Cardiac septum (tissue), 1 donor: ENCODE measurements at regions of chr18 and their contacts with region 1.

Region 1: GRCh38 chr18:44679056-44679905 is 1.4 kb upstream of the SETBP1 start:
- DNase-seq: peak; percentile 90

Region 2: DNA sequence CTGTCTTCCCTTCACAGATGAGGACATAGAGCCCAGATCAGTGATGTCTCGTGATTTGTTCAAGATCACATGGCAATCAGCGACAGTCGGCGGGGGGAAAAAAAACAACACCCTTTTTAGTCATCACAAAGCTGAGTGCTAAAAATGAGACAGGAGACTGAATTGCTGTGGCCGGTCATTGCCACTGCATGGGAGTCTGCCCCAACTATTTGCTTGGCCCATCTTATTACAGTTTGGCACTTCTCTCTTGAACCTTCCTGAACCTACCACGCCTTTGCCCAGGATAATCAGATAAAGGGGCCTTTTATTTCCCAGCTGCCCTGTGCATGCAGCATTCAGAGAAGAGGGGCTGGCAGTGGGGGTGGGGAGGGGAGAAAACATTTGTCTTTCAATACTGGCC is 44.1 kb after region 1 on chr18:
- intact Hi-C with region 1: loop called (anchors 5 kb)
- DNase-seq: no peak

Region 3: DNA sequence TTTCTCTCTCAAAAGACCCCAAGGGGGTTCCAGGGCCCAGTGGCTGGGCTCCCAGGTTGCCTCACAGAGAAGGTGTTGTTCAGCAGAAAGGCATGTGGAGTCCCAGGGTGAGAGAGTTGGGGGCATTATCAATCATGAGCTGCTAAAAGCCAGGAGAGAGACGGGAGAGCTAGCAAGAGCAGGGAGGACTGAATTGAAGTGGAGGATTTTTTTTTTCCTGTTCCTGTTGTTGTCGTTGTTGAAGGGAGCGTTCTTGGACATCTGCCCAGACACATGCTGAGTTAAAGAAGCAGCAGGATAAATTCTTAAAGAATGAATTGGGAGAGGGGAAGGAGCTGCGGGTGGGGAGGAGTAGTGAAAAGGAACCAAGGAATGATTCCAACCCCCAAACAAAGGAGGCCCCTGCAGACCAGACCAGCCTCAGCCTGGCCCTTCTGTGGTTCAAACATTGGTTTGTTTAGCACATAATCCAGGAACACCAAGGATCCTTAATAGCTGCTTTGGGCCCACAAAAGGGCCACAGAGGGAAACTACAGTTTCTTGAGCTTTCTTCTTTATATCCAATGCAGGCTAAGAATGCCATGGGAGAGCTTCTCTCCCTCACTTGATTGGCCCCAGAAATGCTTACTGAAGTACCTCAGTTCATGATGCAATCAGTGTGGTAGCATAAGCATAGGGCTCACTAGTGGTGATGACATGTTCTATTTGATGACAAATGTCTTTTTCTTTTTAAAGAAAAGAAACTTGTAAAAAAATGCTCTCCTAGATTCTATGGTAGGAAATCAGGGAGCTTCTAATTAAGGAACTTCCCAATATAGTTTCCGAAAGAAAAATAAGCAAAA is 147.4 kb after region 1 on chr18:
- intact Hi-C with region 1: loop called (anchors 10 kb)
- DNase-seq: no peak

Region 4: DNA sequence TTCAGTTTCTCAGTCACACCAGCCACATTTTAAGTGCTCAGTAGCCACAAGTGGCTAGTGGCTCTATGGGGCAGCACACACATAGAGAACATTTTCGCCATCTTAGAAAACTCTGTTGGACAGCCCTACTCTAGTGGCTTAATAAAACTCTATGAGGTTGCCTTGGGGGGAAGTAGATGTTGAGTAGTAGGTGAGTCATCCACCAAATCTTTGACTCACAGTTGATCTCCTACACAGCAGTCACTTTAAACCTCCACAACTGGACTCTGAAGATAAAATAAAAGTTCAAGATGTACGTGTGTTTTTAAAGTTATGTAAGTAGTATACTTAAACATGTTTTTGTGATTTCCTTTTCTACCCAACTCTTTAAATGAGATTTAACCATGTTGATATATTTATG is 380.4 kb after region 1 on chr18:
- intact Hi-C with region 1: loop called (anchors 5 kb)
- DNase-seq: no peak

Region 5: GRCh38 chr18:45384137-45384961 is 705.1 kb after region 1 on chr18:
- intact Hi-C with region 1: loop called (anchors 10 kb)
- DNase-seq: no peak